T-cell (primary cell): ENCODE measurements at regions of chr13 and their contacts with region 1.

Region 1: DNA sequence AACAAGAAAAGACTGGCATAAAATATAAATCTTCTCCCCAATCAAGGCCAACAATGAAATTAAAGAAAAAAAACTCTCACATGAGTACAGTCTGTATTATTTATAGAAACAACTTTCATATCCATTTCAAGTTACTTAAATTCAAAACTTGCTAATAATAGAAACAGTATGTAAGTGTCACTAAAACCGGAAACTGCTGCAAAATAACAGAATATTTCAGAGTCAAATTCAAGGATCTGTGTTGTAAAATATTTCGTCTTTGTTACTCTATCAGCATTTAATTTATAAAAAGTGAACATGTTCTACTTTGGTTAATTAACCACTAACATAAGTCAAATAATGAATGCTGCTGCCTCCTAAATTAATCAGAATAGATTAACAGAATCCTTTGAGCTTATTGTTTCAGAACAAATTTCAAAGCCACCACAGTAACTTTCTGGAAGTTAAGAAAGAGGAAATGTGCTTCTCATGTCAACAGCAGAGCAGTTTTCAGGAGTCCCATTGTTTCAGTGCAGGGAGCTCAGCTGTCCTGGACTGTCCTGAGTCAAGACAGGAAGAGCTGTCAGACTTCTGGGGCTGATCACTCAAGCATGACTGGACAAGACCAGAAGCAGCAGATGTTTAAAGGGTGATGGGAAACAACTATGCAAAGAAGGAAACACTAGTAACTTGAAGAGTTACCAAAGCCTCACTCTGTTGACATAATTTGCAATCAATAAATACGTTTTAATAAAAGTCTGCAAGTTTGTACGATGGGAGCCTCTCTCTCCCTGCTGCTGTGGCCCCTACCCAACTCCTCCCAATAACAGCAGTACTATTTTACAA is 76.9 kb downstream of the FOXO1 start:
- DNase-seq: no peak
- ATAC-seq: peak in 3 of 4 experiments; percentile 22 to 45 (median 34)
- H3K4me3 ChIP-seq: peak overlapping the region in 1 of 2 donors; percentile 8
- H3K4me3 Mint-ChIP-seq: peak overlapping the region; percentile 55 to 65 (median 59)
- H3K27ac ChIP-seq: peak overlapping the region; percentile 27
- H3K27ac Mint-ChIP-seq: peak overlapping the region; percentile 83 to 93
- H3K4me1 ChIP-seq: peaks cover 61 to 62% of the 10 kb centered on the region in 2 experiments
- H3K4me1 Mint-ChIP-seq: peaks cover 97 to 99% (median 97%) of the 10 kb centered on the region in 3 donors
- H3K27me3 ChIP-seq: no peaks in the 10 kb centered on the region
- H3K27me3 Mint-ChIP-seq: no peaks in the 10 kb centered on the region

Region 2: GRCh38 chr13:39787086-39787487 is 802.4 kb before region 1 on chr13:
- CTCF ChIA-PET with region 1: no interaction called
- POLR2A ChIA-PET with region 1: no interaction called
- DNase-seq: no peak
- ATAC-seq: no peak
- H3K4me3 ChIP-seq: no peak overlapping the region
- H3K4me3 Mint-ChIP-seq: no peak overlapping the region
- H3K27ac ChIP-seq: no peak overlapping the region
- H3K27ac Mint-ChIP-seq: no peak overlapping the region
- H3K4me1 ChIP-seq: no peaks in the 10 kb centered on the region
- H3K4me1 Mint-ChIP-seq: no peaks in the 10 kb centered on the region
- H3K27me3 ChIP-seq: no peaks in the 10 kb centered on the region
- H3K27me3 Mint-ChIP-seq: peaks cover 0 to 3% of the 10 kb centered on the region in 2 donors

Region 3: DNA sequence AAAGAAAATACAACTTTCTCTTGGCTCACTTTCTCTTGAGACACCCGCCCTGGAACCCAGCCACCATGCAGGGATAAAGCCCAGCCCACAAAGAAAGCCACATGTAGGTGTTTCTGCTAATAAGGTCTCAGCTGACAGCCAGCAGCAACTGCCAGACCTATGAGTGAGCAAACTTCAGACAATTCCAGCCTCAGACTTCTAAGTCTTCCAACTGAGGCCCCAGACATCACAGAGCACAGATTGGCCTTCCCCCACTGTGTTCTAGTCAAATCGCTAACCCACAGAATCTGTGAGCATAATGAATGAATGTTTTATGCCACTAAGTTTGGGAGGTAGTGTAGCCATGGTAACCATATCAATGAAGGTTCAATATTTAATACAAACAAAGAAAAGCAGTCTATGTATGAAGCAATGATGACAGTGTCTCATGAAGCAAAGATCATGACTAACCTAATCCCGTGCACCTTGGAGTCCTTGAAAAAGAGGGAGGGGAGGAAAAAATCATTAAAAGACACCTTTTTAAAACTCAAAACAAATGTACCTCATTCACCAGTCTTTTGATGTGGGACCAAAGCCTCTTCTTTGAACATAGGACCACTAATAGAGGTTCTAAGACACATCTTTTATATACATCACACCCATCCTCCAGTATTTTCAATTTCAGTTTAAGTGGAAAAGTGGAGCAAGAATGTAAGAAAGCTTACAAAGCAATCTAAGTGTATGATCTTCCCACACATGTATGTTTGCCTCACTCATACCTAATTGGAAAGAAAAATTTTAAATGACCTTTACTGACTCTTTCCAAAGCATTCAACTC is 175.3 kb after region 1 on chr13:
- CTCF ChIA-PET with region 1: no interaction called
- POLR2A ChIA-PET with region 1: interaction called in 1 of 2 experiments, 11 read pairs
- DNase-seq: peak in 2 of 35 experiments; percentile 31 to 36
- ATAC-seq: peak in 2 of 4 experiments; percentile 35 to 86
- H3K4me3 ChIP-seq: no peak overlapping the region
- H3K4me3 Mint-ChIP-seq: no peak overlapping the region
- H3K27ac ChIP-seq: no peak overlapping the region
- H3K27ac Mint-ChIP-seq: peak overlapping the region; percentile 55 to 66
- H3K4me1 ChIP-seq: peaks cover 6 to 9% of the 10 kb centered on the region in 2 experiments
- H3K4me1 Mint-ChIP-seq: peaks cover 35 to 54% (median 52%) of the 10 kb centered on the region in 3 donors
- H3K27me3 ChIP-seq: no peaks in the 10 kb centered on the region
- H3K27me3 Mint-ChIP-seq: no peaks in the 10 kb centered on the region

Region 4: DNA sequence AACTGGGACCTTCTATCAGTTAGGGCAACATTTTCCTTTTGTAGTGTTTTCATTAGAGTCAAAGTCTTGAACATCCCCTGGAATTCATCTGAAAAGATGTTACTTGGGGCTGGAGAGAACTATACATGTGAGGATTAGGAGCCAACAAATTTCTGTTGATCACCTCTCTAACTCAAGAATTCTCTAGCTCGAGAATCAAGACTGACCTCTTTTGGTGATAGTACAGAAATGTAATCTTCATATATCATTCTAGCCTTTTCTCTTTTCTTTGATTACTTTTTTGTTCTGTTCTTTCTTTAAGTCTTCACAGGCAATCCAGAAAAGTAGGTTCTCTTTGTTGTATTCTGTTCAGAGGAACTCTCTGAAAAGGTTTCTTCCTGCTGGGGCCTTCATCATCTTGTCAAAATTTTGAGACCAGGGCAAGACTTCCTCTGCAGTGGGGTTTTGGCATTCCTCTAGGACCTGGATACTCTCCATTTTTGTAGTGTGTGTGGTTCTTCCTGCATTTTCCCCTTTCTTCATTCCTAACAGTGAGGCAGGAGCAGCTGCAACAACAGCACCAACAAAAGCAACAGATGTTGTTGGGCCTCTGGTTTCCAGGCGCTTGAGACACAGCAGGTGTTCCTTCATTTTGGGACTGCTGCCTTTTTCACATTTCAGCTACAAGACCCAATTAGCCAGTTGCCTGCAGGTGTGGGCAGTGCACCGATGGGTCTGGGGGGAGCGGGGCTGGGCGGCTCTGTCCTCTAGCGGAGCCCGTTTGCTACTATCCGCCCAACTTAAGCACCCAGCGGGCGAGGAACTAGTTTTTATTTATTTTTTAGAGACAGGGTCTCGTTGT is 403.4 kb after region 1 on chr13:
- CTCF ChIA-PET with region 1: no interaction called
- POLR2A ChIA-PET with region 1: no interaction called
- DNase-seq: peak in 1 of 35 experiments; percentile 56
- ATAC-seq: peak; percentile 41 to 64 (median 48)
- H3K4me3 ChIP-seq: no peak overlapping the region
- H3K4me3 Mint-ChIP-seq: no peak overlapping the region
- H3K27ac ChIP-seq: peak overlapping the region; percentile 60
- H3K27ac Mint-ChIP-seq: peak overlapping the region; percentile 80 to 90
- H3K4me1 ChIP-seq: peaks cover 31 to 40% of the 10 kb centered on the region in 2 experiments
- H3K4me1 Mint-ChIP-seq: peaks cover 82 to 91% (median 88%) of the 10 kb centered on the region in 3 donors
- H3K27me3 ChIP-seq: no peaks in the 10 kb centered on the region
- H3K27me3 Mint-ChIP-seq: no peaks in the 10 kb centered on the region

Region 5: DNA sequence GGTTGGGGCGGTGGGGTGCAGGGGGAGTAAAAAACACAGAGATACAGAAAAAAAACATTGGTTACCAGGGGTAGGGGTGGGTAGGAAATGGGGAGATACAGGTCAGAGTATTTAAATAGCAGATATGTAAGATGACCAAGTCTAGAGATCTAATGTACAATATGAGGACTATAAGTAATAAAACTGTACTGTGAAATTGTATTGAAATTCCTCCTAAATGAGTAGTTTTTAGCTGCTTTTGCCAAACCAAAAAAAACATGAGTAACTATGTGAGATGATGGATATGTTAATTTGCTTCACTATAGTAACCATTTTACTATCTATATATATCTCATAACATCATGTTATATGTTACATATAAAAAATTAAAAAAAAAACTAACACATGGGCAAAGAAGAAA is 1341.8 kb after region 1 on chr13:
- CTCF ChIA-PET with region 1: no interaction called
- POLR2A ChIA-PET with region 1: no interaction called
- DNase-seq: no peak
- ATAC-seq: no peak
- H3K4me3 ChIP-seq: no peak overlapping the region
- H3K4me3 Mint-ChIP-seq: no peak overlapping the region
- H3K27ac ChIP-seq: no peak overlapping the region
- H3K27ac Mint-ChIP-seq: no peak overlapping the region
- H3K4me1 ChIP-seq: no peaks in the 10 kb centered on the region
- H3K4me1 Mint-ChIP-seq: peaks cover 37 to 40% (median 38%) of the 10 kb centered on the region in 3 donors
- H3K27me3 ChIP-seq: no peaks in the 10 kb centered on the region
- H3K27me3 Mint-ChIP-seq: no peaks in the 10 kb centered on the region